Mammary epithelial cell (primary cell): ENCODE measurements at regions of chr2 and their contacts with region 1.

Region 1: DNA sequence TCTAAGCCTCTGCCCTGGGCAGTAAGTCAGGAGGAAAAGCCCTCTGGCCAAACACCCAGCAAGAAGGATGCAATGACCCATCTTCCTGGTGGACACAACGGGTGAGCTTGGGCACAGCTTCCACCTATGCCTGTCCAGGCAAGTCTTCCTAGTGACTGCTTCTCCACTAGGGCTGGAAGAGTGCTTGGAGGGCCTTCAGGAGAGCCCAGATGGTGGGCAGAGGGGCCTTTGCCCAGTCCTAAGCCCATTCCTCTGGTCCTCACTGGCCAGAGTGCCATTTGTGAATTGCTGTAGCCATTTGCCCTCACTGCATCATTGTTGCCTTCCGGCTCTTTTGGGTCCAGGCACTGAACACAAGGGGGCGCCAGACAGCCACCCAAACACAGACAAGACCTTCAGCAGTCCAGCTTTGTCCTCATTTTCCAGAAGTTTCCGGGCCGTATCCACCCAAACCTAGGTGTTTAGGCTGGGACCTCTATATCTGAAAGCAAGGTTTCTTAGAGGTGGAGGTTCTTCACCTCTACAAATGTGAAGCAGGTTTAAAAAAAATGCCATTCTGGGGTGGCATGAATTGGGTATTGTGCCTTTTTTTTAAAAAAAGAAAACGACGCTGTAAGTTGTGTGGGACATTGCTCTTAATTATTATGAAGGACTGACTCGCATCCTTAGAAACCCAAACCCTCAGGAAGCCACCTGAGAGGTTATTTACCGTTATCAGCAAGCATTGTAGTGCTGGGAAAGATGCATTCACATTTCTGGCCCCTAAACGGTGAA is 29.5 kb downstream of the PAX8 start:
- DNase-seq: peak; percentile 69
- H3K4me3 ChIP-seq: no peak overlapping the region
- H3K27ac ChIP-seq: no peak overlapping the region
- H3K4me1 ChIP-seq: peaks cover 29% of the 10 kb centered on the region
- H3K27me3 ChIP-seq: no peaks in the 10 kb centered on the region
- CTCF ChIP-seq: peak; percentile 91 to 97

Region 2: GRCh38 chr2:113157118-113157896 is 91.9 kb before region 1 on chr2:
- CTCF ChIA-PET with region 1: no interaction called
- dilution Hi-C with region 1: loop called (anchors 5 kb)
- in situ Hi-C with region 1: no loop called
- intact Hi-C with region 1: no loop called
- DNase-seq: peak; percentile 55
- H3K4me3 ChIP-seq: peak overlapping the region; percentile 52 to 76 (median 62)
- H3K27ac ChIP-seq: peak overlapping the region; percentile 79
- H3K4me1 ChIP-seq: peaks cover 28% of the 10 kb centered on the region
- H3K27me3 ChIP-seq: no peaks in the 10 kb centered on the region
- CTCF ChIP-seq: no peak

Region 3: GRCh38 chr2:113203901-113204519 is 45.2 kb before region 1 on chr2:
- CTCF ChIA-PET with region 1: interaction called, 3 read pairs
- dilution Hi-C with region 1: no loop called
- in situ Hi-C with region 1: no loop called
- intact Hi-C with region 1: loop called (anchors 1 kb)
- DNase-seq: peak; percentile 64
- H3K4me3 ChIP-seq: no peak overlapping the region
- H3K27ac ChIP-seq: no peak overlapping the region
- H3K4me1 ChIP-seq: peaks cover 36% of the 10 kb centered on the region
- H3K27me3 ChIP-seq: no peaks in the 10 kb centered on the region
- CTCF ChIP-seq: peak; percentile 91 to 94

Region 4: GRCh38 chr2:113225263-113226259 is 23.6 kb before region 1 on chr2:
- CTCF ChIA-PET with region 1: no interaction called
- dilution Hi-C with region 1: no loop called
- in situ Hi-C with region 1: no loop called
- intact Hi-C with region 1: no loop called
- DNase-seq: no peak
- H3K4me3 ChIP-seq: no peak overlapping the region
- H3K27ac ChIP-seq: no peak overlapping the region
- H3K4me1 ChIP-seq: no peaks in the 10 kb centered on the region
- H3K27me3 ChIP-seq: no peaks in the 10 kb centered on the region
- CTCF ChIP-seq: no peak

Region 5: DNA sequence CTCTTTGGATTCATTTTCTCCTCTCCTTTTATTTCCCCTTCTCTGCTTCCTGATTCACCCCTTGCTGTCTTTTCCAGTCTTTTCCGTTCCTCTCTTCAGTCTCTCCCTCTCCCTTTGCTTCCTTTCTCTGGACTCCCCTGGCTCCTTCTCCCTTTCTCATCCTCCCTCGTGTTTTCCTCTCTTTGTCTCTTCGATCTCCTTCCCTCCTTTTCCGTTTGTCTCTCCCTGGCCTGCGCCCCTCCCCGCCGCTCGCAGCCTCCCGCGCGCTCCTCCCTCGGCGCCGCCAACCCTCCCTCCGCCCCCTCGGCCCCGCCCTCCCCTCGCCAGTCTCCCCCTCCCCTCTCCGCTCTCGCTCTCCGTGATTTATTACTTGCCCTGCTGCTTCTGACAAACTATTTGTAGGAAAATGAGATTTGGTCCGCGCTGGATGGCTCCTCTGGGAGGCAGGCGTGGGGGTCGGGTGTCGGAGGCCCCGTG is 75.5 kb after region 1 on chr2:
- CTCF ChIA-PET with region 1: interaction called, 3 read pairs
- dilution Hi-C with region 1: no loop called
- in situ Hi-C with region 1: no loop called
- intact Hi-C with region 1: loop called (anchors 1 kb)
- DNase-seq: peak; percentile 65
- H3K4me3 ChIP-seq: peak overlapping the region; percentile 56 to 86 (median 67)
- H3K27ac ChIP-seq: peak overlapping the region; percentile 86
- H3K4me1 ChIP-seq: peaks cover 45% of the 10 kb centered on the region
- H3K27me3 ChIP-seq: no peaks in the 10 kb centered on the region
- CTCF ChIP-seq: no peak

Region 6: GRCh38 chr2:113390124-113390849 is 141.1 kb after region 1 on chr2:
- CTCF ChIA-PET with region 1: no interaction called
- dilution Hi-C with region 1: no loop called
- in situ Hi-C with region 1: no loop called
- intact Hi-C with region 1: loop called (anchors 5 kb)
- DNase-seq: peak; percentile 51
- H3K4me3 ChIP-seq: no peak overlapping the region
- H3K27ac ChIP-seq: no peak overlapping the region
- H3K4me1 ChIP-seq: no peaks in the 10 kb centered on the region
- H3K27me3 ChIP-seq: no peaks in the 10 kb centered on the region
- CTCF ChIP-seq: peak; percentile 93 to 96